ENCODE measurements at regions of chr6 and their contacts with region 1.

Region 1: GRCh38 chr6:1554476-1555310 is 55.0 kb upstream of the FOXC1 start:
- DNase-seq: peak; percentile 41 to 86 (median 60)
- ATAC-seq: peak; percentile 88
- H3K4me3 ChIP-seq: peak overlapping the region; percentile 72
- H3K4me3 Mint-ChIP-seq: peak overlapping the region; percentile 80
- H3K27ac ChIP-seq: peak overlapping the region in 1 of 2 donors; percentile 25
- H3K27ac Mint-ChIP-seq: peak overlapping the region; percentile 78
- H3K4me1 ChIP-seq: peaks cover 15% of the 10 kb centered on the region
- H3K4me1 Mint-ChIP-seq: peaks cover 43% of the 10 kb centered on the region
- H3K27me3 ChIP-seq: no peaks in the 10 kb centered on the region
- H3K27me3 Mint-ChIP-seq: no peaks in the 10 kb centered on the region
- CTCF ChIP-seq: peak; percentile 81

Region 2: GRCh38 chr6:1535295-1535694 is 19.4 kb before region 1 on chr6:
- CTCF ChIA-PET with region 1: interaction called, 5 read pairs
- POLR2A ChIA-PET with region 1: interaction called, 12 read pairs
- intact Hi-C with region 1: no loop called
- DNase-seq: peak in 12 of 14 experiments; percentile 14 to 79 (median 48)
- ATAC-seq: peak; percentile 97
- H3K4me3 ChIP-seq: no peak overlapping the region
- H3K4me3 Mint-ChIP-seq: peak overlapping the region; percentile 73
- H3K27ac ChIP-seq: peak overlapping the region; percentile 2 to 33
- H3K27ac Mint-ChIP-seq: no peak overlapping the region
- H3K4me1 ChIP-seq: peaks cover 32% of the 10 kb centered on the region
- H3K4me1 Mint-ChIP-seq: peaks cover 36% of the 10 kb centered on the region
- H3K27me3 ChIP-seq: no peaks in the 10 kb centered on the region
- H3K27me3 Mint-ChIP-seq: no peaks in the 10 kb centered on the region
- CTCF ChIP-seq: no peak

Region 3: DNA sequence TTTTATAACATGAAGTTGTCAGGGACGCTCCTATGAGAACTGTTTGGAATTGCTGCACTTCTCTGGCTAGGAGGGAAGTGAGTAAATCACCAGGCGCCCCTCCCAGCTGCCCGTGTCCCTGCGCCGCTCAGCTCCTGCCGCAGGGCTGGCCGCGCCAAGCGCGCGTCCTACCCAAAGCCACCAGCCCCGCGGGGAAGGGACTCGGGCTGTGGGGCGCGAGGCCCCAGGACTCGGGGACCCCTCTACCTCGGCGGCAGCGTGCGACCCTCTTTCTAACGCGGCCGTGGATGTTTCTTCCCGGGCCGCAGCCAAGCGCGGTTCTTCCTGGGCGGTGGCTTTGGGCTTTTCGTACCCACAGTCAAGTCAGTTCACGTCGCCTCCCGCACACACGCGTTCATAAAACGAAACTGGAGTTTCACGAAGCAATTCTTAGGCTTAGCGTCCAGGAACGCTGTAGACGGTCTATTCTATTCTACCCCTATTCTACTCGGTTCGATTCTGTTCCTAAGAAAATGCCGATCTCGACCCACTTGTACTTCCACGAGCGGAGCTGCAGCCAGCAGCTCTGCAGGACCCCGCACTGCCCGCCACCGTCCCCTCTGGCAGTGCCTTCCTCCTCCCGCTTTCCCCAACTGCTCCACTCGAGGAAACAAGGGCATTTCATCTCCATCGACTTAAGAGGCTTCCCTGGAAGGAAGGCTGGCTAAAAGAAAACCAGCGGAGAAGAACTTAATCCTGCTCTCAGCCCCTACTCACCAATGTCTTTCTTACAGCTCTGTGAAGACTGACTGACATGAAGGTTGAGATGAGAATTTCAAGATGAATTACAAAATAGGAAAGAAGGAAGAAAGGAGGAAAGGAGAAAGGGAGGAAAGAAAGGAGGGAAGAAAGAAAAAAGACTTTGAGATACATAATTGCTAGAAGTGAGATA is 70.4 kb after region 1 on chr6:
- CTCF ChIA-PET with region 1: no interaction called
- POLR2A ChIA-PET with region 1: no interaction called
- intact Hi-C with region 1: no loop called
- DNase-seq: peak in 2 of 14 experiments; percentile 22 to 32
- ATAC-seq: peak; percentile 32
- H3K4me3 ChIP-seq: peak overlapping the region; percentile 46
- H3K4me3 Mint-ChIP-seq: peak overlapping the region; percentile 69
- H3K27ac ChIP-seq: no peak overlapping the region
- H3K27ac Mint-ChIP-seq: no peak overlapping the region
- H3K4me1 ChIP-seq: peaks cover 17% of the 10 kb centered on the region
- H3K4me1 Mint-ChIP-seq: peaks cover 21% of the 10 kb centered on the region
- H3K27me3 ChIP-seq: peaks cover 53 to 76% of the 10 kb centered on the region in 2 experiments
- H3K27me3 Mint-ChIP-seq: peaks cover 81% of the 10 kb centered on the region
- CTCF ChIP-seq: no peak